SK-N-SH (cell line): ENCODE measurements at regions of chr20 and their contacts with region 1.

Region 1: DNA sequence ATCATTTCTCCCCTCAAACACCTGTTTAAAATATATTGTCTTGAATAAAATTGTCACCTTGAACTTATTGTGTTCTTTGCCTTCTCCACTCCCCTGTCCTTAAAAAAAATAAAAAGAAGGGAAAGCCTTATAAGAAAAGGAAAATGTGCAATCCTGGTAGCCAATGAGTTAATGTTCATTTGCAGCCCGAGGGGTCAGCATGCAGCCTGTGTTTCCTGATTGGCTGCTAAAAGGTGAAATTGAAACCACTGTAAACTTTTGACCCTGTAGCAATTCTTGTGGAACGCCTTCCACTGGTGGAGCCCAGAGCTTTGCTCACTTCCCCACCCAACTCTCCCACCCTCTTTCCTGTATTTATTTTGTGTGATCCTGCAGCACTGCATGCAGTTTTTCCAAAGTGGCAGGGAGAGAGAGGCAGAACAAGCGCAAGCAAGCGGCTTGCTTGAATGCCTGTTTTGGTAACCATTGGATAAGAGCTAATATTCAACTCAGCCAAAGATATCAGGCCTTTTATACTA is 74.9 kb downstream of the NCOA3 start:
- DNase-seq: peak; percentile 72
- H3K4me3 ChIP-seq: peak overlapping the region in 1 of 2 experiments; percentile 21; a peak in 1 of 4 replicates
- H3K27ac ChIP-seq: peak overlapping the region; percentile 44 to 95
- H3K4me1 ChIP-seq: peaks cover 41 to 43% of the 10 kb centered on the region in 2 experiments
- H3K27me3 ChIP-seq: no peaks in the 10 kb centered on the region
- CTCF ChIP-seq: no peak
- EP300 ChIP-seq: peak in 1 of 2 experiments; percentile 48; a peak in 1 of 4 replicates
- RAD21 ChIP-seq: peak; percentile 18; the same call in 1 of the 2 replicates

Region 2: DNA sequence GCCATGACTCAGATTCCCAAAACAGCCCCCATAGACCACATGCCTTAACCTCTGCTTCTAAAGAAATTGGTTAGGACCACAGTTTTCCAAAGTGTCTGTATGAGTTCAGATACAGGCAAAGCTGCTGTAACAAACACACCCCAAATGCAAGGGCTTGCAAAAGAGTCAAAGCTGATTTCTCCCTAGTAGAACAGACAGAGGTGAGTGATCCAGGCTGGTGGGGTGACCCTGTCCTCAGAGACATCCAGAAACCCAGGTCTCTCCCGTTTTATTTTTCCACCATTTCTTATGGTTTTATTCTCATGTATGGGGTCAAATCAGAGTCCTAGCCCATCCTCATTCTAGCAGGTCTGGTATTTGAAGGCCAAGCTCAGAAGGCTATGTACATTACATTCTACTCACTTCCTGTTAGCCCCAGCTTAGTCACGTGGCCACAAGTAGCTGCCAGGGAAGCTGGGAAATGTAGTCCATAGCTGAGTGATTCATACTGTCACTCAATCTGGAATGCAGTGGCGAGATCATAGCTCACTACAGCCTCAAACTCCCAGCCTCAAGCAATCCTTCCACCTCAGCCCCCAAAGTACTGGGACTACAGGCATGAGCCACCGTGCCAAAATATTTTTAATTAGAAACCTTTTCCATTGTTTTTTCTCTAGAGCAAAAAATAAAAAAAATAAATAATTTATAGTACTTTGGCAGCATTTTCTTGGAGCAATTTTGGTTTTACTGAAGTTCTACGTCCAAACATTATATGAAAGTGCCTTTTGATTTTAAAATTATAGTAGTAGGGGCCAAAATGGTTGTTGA is 395.3 kb before region 1 on chr20:
- CTCF ChIA-PET with region 1: no interaction called
- POLR2A ChIA-PET with region 1: no interaction called
- DNase-seq: peak; percentile 45
- H3K4me3 ChIP-seq: no peak overlapping the region
- H3K27ac ChIP-seq: no peak overlapping the region
- H3K4me1 ChIP-seq: peaks cover 0 to 5% of the 10 kb centered on the region in 2 experiments; a peak in 1 of 4 replicates
- H3K27me3 ChIP-seq: no peaks in the 10 kb centered on the region
- CTCF ChIP-seq: no peak
- EP300 ChIP-seq: no peak
- RAD21 ChIP-seq: no peak

Region 3: DNA sequence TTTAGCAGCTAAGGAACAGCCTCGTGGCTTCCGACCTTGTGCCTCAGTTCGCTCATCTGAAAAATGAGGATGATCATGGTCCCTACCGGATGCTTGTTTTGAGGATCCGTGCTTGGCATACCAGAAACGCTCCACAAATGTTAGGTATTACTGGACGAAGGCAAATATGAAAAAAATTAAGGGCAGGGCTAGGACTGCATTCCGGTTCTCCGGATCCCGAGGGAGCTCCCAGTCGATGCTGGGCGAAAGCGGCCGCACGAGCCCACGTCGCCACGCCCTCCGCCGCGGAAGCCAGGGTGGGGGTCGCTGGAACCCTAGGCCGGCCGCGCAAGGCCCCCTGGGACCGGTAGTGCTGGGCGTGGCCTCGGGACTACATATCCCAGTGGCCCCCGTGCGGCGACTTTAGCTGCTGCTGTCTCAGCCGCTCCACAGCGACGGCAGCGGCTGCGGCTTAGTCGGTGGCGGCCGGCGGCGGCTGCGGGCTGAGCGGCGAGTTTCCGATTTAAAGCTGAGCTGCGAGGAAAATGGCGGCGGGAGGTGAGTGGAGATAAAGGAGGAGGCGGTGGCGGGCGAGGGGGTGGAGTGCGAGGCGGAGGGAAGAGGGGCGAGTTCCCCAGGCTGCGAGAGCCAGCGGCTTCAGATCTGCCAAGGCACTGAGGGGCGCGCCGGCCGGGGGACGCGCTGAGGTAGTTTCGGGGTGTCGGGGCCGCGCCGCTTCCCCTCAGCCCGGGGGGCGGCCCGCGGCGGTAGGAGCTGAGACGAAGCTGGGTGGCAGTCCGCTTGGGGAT is 74.9 kb before region 1 on chr20 and contains the start of gene NCOA3:
- CTCF ChIA-PET with region 1: interaction called, 13 read pairs
- POLR2A ChIA-PET with region 1: no interaction called
- DNase-seq: peak; percentile 98
- H3K4me3 ChIP-seq: peak within 1 kb of the TSS; percentile 73 to 87
- H3K27ac ChIP-seq: peak within 1 kb of the TSS; percentile 83 to 90
- H3K4me1 ChIP-seq: peaks cover 0 to 9% of the 10 kb centered on the region in 2 experiments; a peak in 3 of 4 replicates
- H3K27me3 ChIP-seq: no peaks in the 10 kb centered on the region
- CTCF ChIP-seq: peak; percentile 37
- EP300 ChIP-seq: peak; percentile 17 to 44; a peak in 2 of 4 replicates
- RAD21 ChIP-seq: no peak; the same call in 1 of the 2 replicates
- polyA plus RNA-seq, gene NCOA3: 5.8 and 8.3 TPM in 2 replicates